GM10248 (cell line): ENCODE measurements at regions of chr18 and their contacts with region 1.

Region 1: DNA sequence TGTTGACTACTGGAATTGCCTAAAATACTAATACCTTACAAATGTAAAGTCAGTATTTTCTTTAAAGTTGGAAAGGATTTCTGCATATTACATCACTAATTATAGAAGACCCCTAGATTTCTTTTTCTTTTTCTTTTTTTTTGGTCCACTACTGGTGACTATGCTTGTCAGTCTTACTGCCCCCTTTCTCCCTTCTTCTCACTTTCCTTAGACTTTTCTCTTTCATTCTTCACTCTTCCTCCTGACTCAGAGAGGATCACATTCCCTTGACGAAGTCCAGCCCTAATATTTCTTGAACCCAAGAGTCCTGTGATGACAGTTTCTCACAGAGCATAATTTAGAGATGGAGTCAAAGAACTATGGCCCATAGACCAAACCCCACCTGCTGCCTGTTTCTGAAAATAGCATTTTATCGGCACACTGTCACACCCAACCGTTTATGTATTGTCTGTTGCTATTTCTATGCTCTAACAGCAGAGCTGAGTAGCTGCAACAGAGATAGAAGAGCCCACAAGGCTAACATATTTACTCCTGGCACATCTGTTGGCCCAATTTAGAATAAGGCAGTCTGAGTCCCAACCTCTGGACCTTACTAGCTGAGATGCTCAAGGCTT is 40.6 kb upstream of the RIOK3 start:
- DNase-seq: no peak
- CTCF ChIP-seq: no peak

Region 2: DNA sequence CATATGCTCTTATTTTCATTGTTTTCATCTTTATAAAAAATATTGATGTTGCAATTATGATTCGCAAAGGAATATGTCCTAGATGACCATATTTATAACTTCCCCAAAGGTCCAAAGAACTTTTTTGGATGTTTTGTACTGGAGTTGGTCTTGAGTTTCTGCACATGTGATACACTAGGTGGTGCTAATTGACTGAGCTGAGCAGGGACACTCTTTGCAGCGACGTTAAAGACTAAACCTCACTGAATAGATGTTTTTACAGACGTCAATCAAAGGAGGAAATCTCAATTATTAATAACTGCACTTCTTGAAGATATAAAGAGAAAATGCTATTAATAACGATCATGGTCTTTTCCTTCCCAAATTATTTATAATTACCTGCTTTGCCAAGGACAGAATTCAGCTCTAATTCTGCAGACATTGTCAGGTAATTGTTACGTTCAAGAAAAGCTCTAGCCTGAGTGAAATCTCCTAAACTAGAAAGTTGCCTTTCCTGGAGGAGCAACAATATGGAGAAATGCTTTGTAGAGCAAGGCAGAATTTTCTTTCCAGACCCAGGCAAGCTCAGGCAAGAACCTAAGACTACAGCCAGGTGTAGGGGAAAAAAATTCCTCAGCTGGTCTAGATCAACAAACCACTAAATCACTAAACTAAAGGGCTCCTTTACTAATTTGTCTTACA is 598.7 kb before region 1 on chr18:
- CTCF ChIA-PET with region 1: interaction called, 16 read pairs
- POLR2A ChIA-PET with region 1: no interaction called
- DNase-seq: peak; percentile 34
- CTCF ChIP-seq: peak; percentile 71

Region 3: GRCh38 chr18:23126376-23127056 is 285.9 kb before region 1 on chr18:
- CTCF ChIA-PET with region 1: interaction called, 43 read pairs
- POLR2A ChIA-PET with region 1: no interaction called
- DNase-seq: no peak
- CTCF ChIP-seq: no peak

Region 4: DNA sequence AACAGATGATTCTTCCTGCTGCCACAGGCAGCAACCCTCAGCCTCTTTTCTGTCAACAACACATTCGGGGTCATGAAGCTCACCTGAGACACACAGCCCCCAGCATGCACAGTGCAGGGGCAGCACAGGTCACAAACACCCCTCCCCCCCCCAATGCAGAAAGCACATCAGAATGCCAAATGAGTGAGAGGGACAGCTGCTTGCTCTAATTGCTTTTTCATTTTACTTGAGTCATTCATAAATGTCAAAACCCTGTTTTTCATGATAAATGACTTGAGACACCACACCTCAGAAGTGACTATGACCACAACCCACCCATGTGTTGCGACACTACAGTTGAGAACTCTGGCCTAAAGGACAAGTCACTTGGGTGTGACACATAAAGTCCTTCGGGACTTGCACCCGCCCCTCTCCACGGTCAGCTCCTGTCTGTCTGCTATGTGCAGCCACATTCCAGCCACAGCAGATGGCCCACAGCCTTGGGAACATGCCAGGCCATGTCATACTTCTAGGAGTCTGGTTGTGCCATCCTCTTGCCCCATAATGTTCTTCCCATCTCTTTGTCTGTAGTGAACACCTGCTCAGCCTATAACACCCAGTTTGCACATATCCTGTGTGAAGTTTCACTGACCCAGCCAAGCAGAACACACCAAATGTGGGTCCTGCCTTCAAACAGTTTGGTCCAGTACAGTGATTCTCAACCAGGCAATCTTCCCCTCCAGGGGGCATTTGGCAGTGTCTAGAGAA is 10.4 kb after region 1 on chr18:
- CTCF ChIA-PET with region 1: interaction called, 19 read pairs
- POLR2A ChIA-PET with region 1: no interaction called
- DNase-seq: peak; percentile 73
- CTCF ChIP-seq: no peak